ENCODE measurements at regions of chr20 and their contacts with region 1.

Region 1: GRCh38 chr20:33666293-33667244 is at the start of gene ACTL10:
- DNase-seq: peak; percentile 99
- H3K4me3 Mint-ChIP-seq: peak within 1 kb of the TSS; percentile 77
- H3K27ac Mint-ChIP-seq: peak within 1 kb of the TSS; percentile 90
- H3K4me1 Mint-ChIP-seq: peaks cover 39% of the 10 kb centered on the region
- H3K27me3 Mint-ChIP-seq: no peaks in the 10 kb centered on the region
- CTCF ChIP-seq: no peak
- total RNA-seq, gene ACTL10: 5.4 and 7.3 TPM in 2 replicates

Region 2: DNA sequence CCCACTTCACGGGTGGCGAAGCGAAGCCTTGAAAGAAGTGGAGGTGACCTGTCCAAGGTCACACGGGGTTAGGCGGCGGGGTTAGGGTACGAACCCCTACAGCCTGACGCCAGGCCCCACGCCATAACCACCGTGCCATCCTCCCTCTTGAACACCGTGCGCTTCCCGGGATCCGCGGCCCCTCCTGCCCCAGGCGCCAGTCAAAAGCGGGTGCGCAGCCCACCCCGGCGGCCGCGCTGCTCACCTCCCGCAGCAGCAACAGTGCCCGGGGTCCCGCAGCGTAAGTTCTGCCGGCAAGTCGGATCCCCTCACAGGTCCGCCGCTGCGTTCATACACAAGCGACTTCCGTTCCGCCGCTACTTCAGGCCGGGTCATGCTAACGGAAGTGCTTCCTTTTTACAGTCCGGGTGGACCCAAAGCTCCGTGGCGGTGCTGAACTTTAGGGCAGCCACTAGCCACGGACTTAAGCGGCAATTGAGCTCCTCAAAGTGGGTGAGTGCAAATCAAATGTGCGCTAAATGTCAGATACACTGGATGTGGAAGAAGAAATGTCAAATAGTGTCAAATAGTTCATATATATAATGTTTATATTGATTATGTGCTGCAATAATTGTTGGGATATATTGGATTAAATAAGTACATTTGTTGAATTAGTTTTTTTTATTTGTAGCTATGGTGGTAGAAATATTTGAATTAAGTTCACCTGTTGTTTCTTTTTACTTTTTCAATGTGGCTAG is 265.2 kb before region 1 on chr20 and contains the start of gene CDK5RAP1:
- CTCF ChIA-PET with region 1: interaction called, 10 read pairs
- intact Hi-C with region 1: loop called (anchors 5 kb)
- DNase-seq: peak; percentile 91
- H3K4me3 Mint-ChIP-seq: peak within 1 kb of the TSS; percentile 99
- H3K27ac Mint-ChIP-seq: peak within 1 kb of the TSS; percentile 64
- H3K4me1 Mint-ChIP-seq: peaks cover 19% of the 10 kb centered on the region
- H3K27me3 Mint-ChIP-seq: no peaks in the 10 kb centered on the region
- CTCF ChIP-seq: no peak
- total RNA-seq, gene CDK5RAP1: 63.6 and 65.8 TPM in 2 replicates

Region 3: DNA sequence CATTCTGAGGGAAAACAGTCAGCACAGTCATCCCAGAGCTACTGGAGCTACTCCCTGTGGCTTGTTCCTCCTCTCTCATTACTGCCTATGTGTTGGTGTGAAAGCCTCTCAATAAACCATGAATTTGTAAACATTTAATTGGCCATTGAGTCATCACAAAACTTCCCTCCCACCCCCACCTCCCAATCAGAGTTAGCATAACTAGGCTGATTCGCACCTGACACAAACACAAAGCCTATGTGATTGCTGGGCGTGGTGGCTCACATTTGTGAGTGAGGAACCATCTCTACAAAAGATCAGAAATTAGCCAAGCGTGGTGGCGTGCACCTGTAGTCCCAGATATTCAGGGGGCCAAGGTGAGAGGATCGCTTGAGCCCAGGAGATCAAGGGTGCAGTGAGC is 205.9 kb before region 1 on chr20:
- CTCF ChIA-PET with region 1: interaction called, 13 read pairs
- intact Hi-C with region 1: loop called (anchors 1 kb)
- DNase-seq: no peak
- H3K4me3 Mint-ChIP-seq: no peak overlapping the region
- H3K27ac Mint-ChIP-seq: no peak overlapping the region
- H3K4me1 Mint-ChIP-seq: peaks cover 8% of the 10 kb centered on the region
- H3K27me3 Mint-ChIP-seq: no peaks in the 10 kb centered on the region
- CTCF ChIP-seq: no peak

Region 4: GRCh38 chr20:33686100-33686983 is 19.8 kb after region 1 on chr20 and contains the start of gene E2F1:
- CTCF ChIA-PET with region 1: interaction called, 11 read pairs
- intact Hi-C with region 1: no loop called
- DNase-seq: peak; percentile 100
- H3K4me3 Mint-ChIP-seq: peak within 1 kb of the TSS; percentile 62
- H3K27ac Mint-ChIP-seq: peak within 1 kb of the TSS; percentile 69
- H3K4me1 Mint-ChIP-seq: peaks cover 44% of the 10 kb centered on the region
- H3K27me3 Mint-ChIP-seq: no peaks in the 10 kb centered on the region
- CTCF ChIP-seq: no peak
- total RNA-seq, gene E2F1: 56.9 and 62.3 TPM in 2 replicates

Region 5: GRCh38 chr20:33859157-33859695 is 192.7 kb after region 1 on chr20:
- CTCF ChIA-PET with region 1: no interaction called
- intact Hi-C with region 1: no loop called
- DNase-seq: no peak
- H3K4me3 Mint-ChIP-seq: no peak overlapping the region
- H3K27ac Mint-ChIP-seq: no peak overlapping the region
- H3K4me1 Mint-ChIP-seq: peaks cover 17% of the 10 kb centered on the region
- H3K27me3 Mint-ChIP-seq: no peaks in the 10 kb centered on the region
- CTCF ChIP-seq: no peak

Region 6: GRCh38 chr20:34111702-34112599 is 445.4 kb after region 1 on chr20 and contains the start of gene EIF2S2:
- CTCF ChIA-PET with region 1: no interaction called
- intact Hi-C with region 1: loop called (anchors 10 kb)
- DNase-seq: peak; percentile 97
- H3K4me3 Mint-ChIP-seq: peak within 1 kb of the TSS; percentile 99
- H3K27ac Mint-ChIP-seq: peak within 1 kb of the TSS; percentile 100
- H3K4me1 Mint-ChIP-seq: peaks cover 49% of the 10 kb centered on the region
- H3K27me3 Mint-ChIP-seq: no peaks in the 10 kb centered on the region
- CTCF ChIP-seq: no peak
- total RNA-seq, gene EIF2S2: 173 and 179 TPM in 2 replicates

Measured in Calu3 (cell line).